ENCODE measurements at regions of chr3 and their contacts with region 1.

Region 1: DNA sequence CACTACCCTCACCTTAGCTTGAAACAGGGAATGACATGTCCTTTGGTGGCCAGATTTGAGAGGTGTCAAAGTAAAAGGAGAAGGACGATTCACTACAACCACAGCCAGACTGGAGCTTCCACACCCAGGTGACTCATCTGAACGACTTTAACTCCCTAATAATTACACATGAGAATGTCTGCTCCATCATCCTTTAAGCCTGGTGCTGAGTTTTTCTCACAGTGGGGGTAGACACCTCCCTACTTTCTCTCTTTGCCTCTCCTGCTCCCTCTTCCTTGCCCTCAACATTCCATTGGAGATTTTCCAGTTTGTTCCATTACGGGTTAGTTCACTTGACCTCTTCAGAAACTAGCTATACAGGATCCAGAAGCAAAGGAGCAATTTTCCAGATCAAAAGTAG is 154.3 kb upstream of the BHLHE40 start:
- DNase-seq: no peak
- ATAC-seq: no peak
- H3K4me3 ChIP-seq: no peak overlapping the region
- H3K4me3 Mint-ChIP-seq: peak overlapping the region; percentile 10 to 93 (median 84)
- H3K27ac ChIP-seq: peak overlapping the region; percentile 59
- H3K27ac Mint-ChIP-seq: peak overlapping the region; percentile 85 to 99 (median 94)
- H3K4me1 ChIP-seq: peaks cover 55 to 83% of the 10 kb centered on the region in 2 donors
- H3K4me1 Mint-ChIP-seq: peaks cover 69 to 99% (median 96%) of the 10 kb centered on the region in 7 donors
- H3K27me3 ChIP-seq: no peaks in the 10 kb centered on the region
- H3K27me3 Mint-ChIP-seq: no peaks in the 10 kb centered on the region

Region 2: DNA sequence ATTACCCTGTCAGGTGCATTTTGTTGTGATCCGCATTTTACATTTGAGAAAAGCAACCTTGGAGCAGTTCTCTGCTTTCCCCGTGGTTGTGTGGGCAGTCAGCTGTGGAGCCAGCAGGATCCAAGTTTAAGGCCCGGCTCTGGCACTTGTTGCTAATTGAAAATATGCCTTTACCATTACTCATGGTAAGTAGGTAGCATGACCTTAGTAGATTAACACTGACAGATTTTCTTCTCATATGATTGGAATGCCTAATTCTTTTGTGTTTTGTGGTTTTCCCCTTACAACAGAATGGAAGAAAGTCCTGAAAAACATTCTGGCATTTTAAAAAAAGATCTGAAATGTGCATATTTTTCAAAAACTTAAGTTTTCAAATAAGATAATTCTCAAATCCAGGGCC is 1272.2 kb before region 1 on chr3:
- CTCF ChIA-PET with region 1: no interaction called
- POLR2A ChIA-PET with region 1: no interaction called
- intact Hi-C with region 1: no loop called
- DNase-seq: no peak
- ATAC-seq: no peak
- H3K4me3 ChIP-seq: no peak overlapping the region
- H3K4me3 Mint-ChIP-seq: no peak overlapping the region
- H3K27ac ChIP-seq: no peak overlapping the region
- H3K27ac Mint-ChIP-seq: no peak overlapping the region
- H3K4me1 ChIP-seq: no peaks in the 10 kb centered on the region
- H3K4me1 Mint-ChIP-seq: no peaks in the 10 kb centered on the region
- H3K27me3 ChIP-seq: no peaks in the 10 kb centered on the region
- H3K27me3 Mint-ChIP-seq: peaks cover 0 to 11% (median 5%) of the 10 kb centered on the region in 5 donors

Region 3: GRCh38 chr3:4712143-4712542 is 112.8 kb before region 1 on chr3:
- CTCF ChIA-PET with region 1: interaction called, 13 read pairs
- POLR2A ChIA-PET with region 1: no interaction called
- intact Hi-C with region 1: loop called in 1 of 2 experiments (anchors 1 kb)
- DNase-seq: no peak
- ATAC-seq: no peak
- H3K4me3 ChIP-seq: no peak overlapping the region
- H3K4me3 Mint-ChIP-seq: no peak overlapping the region
- H3K27ac ChIP-seq: no peak overlapping the region
- H3K27ac Mint-ChIP-seq: no peak overlapping the region
- H3K4me1 ChIP-seq: no peaks in the 10 kb centered on the region
- H3K4me1 Mint-ChIP-seq: peaks cover 0 to 38% (median 0%) of the 10 kb centered on the region in 7 donors
- H3K27me3 ChIP-seq: no peaks in the 10 kb centered on the region
- H3K27me3 Mint-ChIP-seq: no peaks in the 10 kb centered on the region

Region 4: DNA sequence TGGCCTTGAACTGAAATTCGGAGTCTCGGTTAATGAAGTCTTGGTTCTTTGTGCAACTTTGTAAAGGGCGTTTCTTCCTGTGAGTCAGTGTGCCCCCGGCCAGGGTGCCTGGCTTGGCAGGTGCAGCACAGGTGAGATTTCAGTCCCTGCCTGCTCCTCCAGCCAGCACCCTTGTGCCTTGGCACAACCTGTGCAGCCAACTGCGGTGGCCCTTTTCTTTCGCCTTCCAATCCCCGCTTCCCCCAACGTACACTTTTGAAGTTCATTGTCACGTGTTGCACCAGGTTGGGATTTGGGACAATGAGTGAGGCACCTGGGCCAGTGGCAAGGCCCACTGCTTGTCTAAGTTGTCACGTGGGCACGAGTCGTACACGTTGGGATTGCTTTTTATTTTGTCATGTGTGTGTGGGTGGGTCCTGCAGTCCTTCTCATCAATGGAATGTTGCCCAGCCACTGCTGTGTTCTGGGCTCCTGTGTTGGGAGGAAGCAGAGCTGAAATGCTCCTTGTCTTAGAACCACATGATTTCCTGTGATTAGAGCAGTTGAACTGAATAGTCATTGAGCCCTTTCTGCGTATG is 88.6 kb before region 1 on chr3:
- CTCF ChIA-PET with region 1: no interaction called
- POLR2A ChIA-PET with region 1: no interaction called
- intact Hi-C with region 1: loop called in 1 of 2 experiments (anchors 2 kb)
- DNase-seq: peak in 2 of 9 donors; percentile 10 to 17
- ATAC-seq: peak; percentile 60
- H3K4me3 ChIP-seq: no peak overlapping the region
- H3K4me3 Mint-ChIP-seq: peak overlapping the region; percentile 17 to 76 (median 54)
- H3K27ac ChIP-seq: peak overlapping the region; percentile 46
- H3K27ac Mint-ChIP-seq: peak overlapping the region; percentile 16 to 89 (median 73)
- H3K4me1 ChIP-seq: peaks cover 39 to 44% of the 10 kb centered on the region in 2 donors
- H3K4me1 Mint-ChIP-seq: peaks cover 50 to 88% (median 72%) of the 10 kb centered on the region in 7 donors
- H3K27me3 ChIP-seq: no peaks in the 10 kb centered on the region
- H3K27me3 Mint-ChIP-seq: no peaks in the 10 kb centered on the region

Region 5: DNA sequence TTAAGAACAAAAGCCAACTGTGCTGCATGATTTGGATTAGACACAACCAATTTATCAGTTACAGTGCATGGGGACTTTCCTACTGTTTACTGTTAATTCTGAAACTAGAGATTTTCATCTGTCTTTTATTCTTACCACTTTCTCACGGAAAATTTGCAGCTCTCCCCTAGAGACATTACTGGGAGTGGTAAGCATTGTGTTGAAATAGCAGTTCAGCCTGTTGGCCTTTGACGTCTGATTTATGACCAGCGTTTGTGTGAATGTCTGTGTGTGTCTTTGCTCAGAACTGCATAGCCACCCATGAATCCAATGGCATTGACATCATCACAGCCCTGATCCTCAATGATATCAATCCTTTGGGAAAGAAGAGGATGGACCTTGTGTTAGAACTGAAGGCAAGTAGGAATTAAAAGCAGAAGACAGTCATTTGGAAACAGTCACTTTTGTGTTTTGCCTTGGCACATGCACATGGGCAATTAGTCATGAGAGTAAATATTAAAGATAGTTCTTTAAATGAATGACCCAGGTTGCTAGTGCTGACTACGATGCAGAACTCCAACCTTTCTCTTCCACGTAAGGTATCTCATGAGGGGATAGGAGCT is 47.8 kb before region 1 on chr3:
- CTCF ChIA-PET with region 1: no interaction called
- POLR2A ChIA-PET with region 1: no interaction called
- intact Hi-C with region 1: no loop called
- DNase-seq: no peak
- ATAC-seq: no peak
- H3K4me3 ChIP-seq: no peak overlapping the region
- H3K4me3 Mint-ChIP-seq: peak overlapping the region in 1 of 10 donors; percentile 87
- H3K27ac ChIP-seq: no peak overlapping the region
- H3K27ac Mint-ChIP-seq: peak overlapping the region in 3 of 9 donors; percentile 11 to 98 (median 11)
- H3K4me1 ChIP-seq: no peaks in the 10 kb centered on the region
- H3K4me1 Mint-ChIP-seq: peaks cover 0 to 68% (median 4%) of the 10 kb centered on the region in 7 donors
- H3K27me3 ChIP-seq: no peaks in the 10 kb centered on the region
- H3K27me3 Mint-ChIP-seq: no peaks in the 10 kb centered on the region

Region 6: GRCh38 chr3:4888913-4889846 is 64.3 kb after region 1 on chr3:
- CTCF ChIA-PET with region 1: no interaction called
- POLR2A ChIA-PET with region 1: interaction called, 4 read pairs
- intact Hi-C with region 1: loop called in 1 of 2 experiments (anchors 1 kb)
- DNase-seq: peak in 6 of 9 donors; percentile 9 to 51 (median 39)
- ATAC-seq: peak; percentile 90
- H3K4me3 ChIP-seq: no peak overlapping the region
- H3K4me3 Mint-ChIP-seq: peak overlapping the region in 8 of 10 donors; percentile 0 to 63 (median 36)
- H3K27ac ChIP-seq: no peak overlapping the region
- H3K27ac Mint-ChIP-seq: peak overlapping the region in 7 of 9 donors; percentile 18 to 91 (median 57)
- H3K4me1 ChIP-seq: peaks cover 13 to 15% of the 10 kb centered on the region in 2 donors
- H3K4me1 Mint-ChIP-seq: peaks cover 17 to 39% (median 18%) of the 10 kb centered on the region in 7 donors
- H3K27me3 ChIP-seq: no peaks in the 10 kb centered on the region
- H3K27me3 Mint-ChIP-seq: no peaks in the 10 kb centered on the region

Region 7: DNA sequence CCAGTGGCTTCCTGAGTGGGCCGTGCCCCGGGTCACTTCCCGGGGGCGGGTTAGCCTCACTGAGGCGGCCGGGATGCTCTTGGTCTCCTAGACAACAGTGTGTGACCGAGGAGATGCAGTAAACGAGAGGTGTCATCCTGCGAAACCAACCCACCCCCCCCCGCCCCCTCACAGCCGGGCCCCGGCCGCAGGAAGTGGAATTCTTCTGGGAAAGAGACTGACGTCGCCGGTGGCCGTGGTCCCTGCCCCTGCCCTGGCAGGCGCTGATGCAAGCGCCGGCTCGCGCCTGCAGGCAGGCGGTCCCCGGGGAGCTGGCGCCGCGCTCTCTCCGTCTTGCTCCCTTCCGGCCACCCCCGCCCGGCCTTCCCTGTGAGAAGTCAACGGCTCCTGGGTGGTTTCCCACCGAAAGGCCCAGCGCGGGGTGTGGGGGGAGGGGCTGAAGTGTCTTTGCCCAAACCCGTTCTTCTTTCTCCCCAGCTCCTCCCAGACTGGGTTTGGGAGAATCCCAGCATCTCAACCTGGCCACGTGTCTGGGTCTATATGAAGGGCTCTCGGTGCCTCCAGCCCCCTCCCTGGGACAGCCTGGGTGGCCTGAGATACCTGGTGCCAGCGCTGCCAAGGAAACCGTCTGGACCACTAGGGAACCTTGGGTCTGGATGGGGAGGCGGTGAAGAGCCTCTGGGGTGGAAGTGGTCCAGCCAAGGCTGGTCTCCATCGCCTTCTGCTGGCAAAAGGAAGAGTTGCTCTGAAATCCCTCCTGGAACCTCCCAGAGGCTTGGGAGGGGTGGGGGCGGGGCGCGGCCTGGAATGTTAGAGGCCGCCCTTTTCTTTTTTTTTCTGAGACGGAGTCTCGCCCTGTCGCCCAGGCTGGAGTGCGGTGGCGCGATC is 201.6 kb after region 1 on chr3:
- CTCF ChIA-PET with region 1: interaction called, 7 read pairs
- POLR2A ChIA-PET with region 1: no interaction called
- intact Hi-C with region 1: loop called in 1 of 2 experiments (anchors 1 kb)
- DNase-seq: peak; percentile 10 to 76 (median 32)
- ATAC-seq: peak; percentile 86
- H3K4me3 ChIP-seq: peak overlapping the region; percentile 70
- H3K4me3 Mint-ChIP-seq: peak overlapping the region; percentile 61 to 90 (median 81)
- H3K27ac ChIP-seq: peak overlapping the region; percentile 41
- H3K27ac Mint-ChIP-seq: peak overlapping the region in 3 of 9 donors; percentile 38 to 92 (median 43)
- H3K4me1 ChIP-seq: peaks cover 3 to 6% of the 10 kb centered on the region in 2 donors
- H3K4me1 Mint-ChIP-seq: peaks cover 0 to 55% (median 9%) of the 10 kb centered on the region in 7 donors
- H3K27me3 ChIP-seq: no peaks in the 10 kb centered on the region
- H3K27me3 Mint-ChIP-seq: peaks cover 0 to 2% (median 0%) of the 10 kb centered on the region in 5 donors